ENCODE measurements at regions of chr3 and their contacts with region 1.

Region 1: GRCh38 chr3:111338059-111338698 is 203.8 kb upstream of the CD96 start:
- DNase-seq: peak; percentile 78
- H3K4me3 Mint-ChIP-seq: no peak overlapping the region
- H3K27ac Mint-ChIP-seq: no peak overlapping the region
- H3K4me1 Mint-ChIP-seq: peaks cover 19% of the 10 kb centered on the region
- H3K27me3 Mint-ChIP-seq: no peaks in the 10 kb centered on the region
- CTCF ChIP-seq: peak; percentile 60

Region 2: GRCh38 chr3:109532257-109533216 is 1805.6 kb before region 1 on chr3:
- CTCF ChIA-PET with region 1: interaction called, 4 read pairs
- POLR2A ChIA-PET with region 1: no interaction called
- intact Hi-C with region 1: loop called (anchors 2 kb)
- DNase-seq: peak; percentile 87
- H3K4me3 Mint-ChIP-seq: no peak overlapping the region
- H3K27ac Mint-ChIP-seq: no peak overlapping the region
- H3K4me1 Mint-ChIP-seq: no peaks in the 10 kb centered on the region
- H3K27me3 Mint-ChIP-seq: no peaks in the 10 kb centered on the region
- CTCF ChIP-seq: peak; percentile 57

Region 3: GRCh38 chr3:109731620-109732473 is 1606.3 kb before region 1 on chr3:
- CTCF ChIA-PET with region 1: interaction called, 3 read pairs
- POLR2A ChIA-PET with region 1: no interaction called
- intact Hi-C with region 1: loop called (anchors 1 kb)
- DNase-seq: peak; percentile 72
- H3K4me3 Mint-ChIP-seq: no peak overlapping the region
- H3K27ac Mint-ChIP-seq: no peak overlapping the region
- H3K4me1 Mint-ChIP-seq: peaks cover 7% of the 10 kb centered on the region
- H3K27me3 Mint-ChIP-seq: no peaks in the 10 kb centered on the region
- CTCF ChIP-seq: peak; percentile 85

Region 4: GRCh38 chr3:111012388-111013248 is 325.6 kb before region 1 on chr3:
- CTCF ChIA-PET with region 1: interaction called, 4 read pairs
- POLR2A ChIA-PET with region 1: no interaction called
- intact Hi-C with region 1: loop called (anchors 5 kb)
- DNase-seq: peak; percentile 60
- H3K4me3 Mint-ChIP-seq: no peak overlapping the region
- H3K27ac Mint-ChIP-seq: no peak overlapping the region
- H3K4me1 Mint-ChIP-seq: peaks cover 5% of the 10 kb centered on the region
- H3K27me3 Mint-ChIP-seq: no peaks in the 10 kb centered on the region
- CTCF ChIP-seq: no peak

Region 5: GRCh38 chr3:111165411-111165810 is 172.8 kb before region 1 on chr3:
- CTCF ChIA-PET with region 1: no interaction called
- POLR2A ChIA-PET with region 1: no interaction called
- intact Hi-C with region 1: no loop called
- DNase-seq: no peak
- H3K4me3 Mint-ChIP-seq: no peak overlapping the region
- H3K27ac Mint-ChIP-seq: no peak overlapping the region
- H3K4me1 Mint-ChIP-seq: no peaks in the 10 kb centered on the region
- H3K27me3 Mint-ChIP-seq: no peaks in the 10 kb centered on the region
- CTCF ChIP-seq: no peak

Region 6: GRCh38 chr3:111210003-111210711 is 128.0 kb before region 1 on chr3:
- CTCF ChIA-PET with region 1: no interaction called
- POLR2A ChIA-PET with region 1: no interaction called
- intact Hi-C with region 1: loop called (anchors 1 kb)
- DNase-seq: peak; percentile 46
- H3K4me3 Mint-ChIP-seq: no peak overlapping the region
- H3K27ac Mint-ChIP-seq: no peak overlapping the region
- H3K4me1 Mint-ChIP-seq: no peaks in the 10 kb centered on the region
- H3K27me3 Mint-ChIP-seq: no peaks in the 10 kb centered on the region
- CTCF ChIP-seq: no peak

Region 7: GRCh38 chr3:111539351-111540331 is 201.5 kb after region 1 on chr3:
- CTCF ChIA-PET with region 1: no interaction called
- POLR2A ChIA-PET with region 1: no interaction called
- intact Hi-C with region 1: loop called (anchors 2 kb)
- DNase-seq: peak; percentile 64
- H3K4me3 Mint-ChIP-seq: no peak overlapping the region
- H3K27ac Mint-ChIP-seq: no peak overlapping the region
- H3K4me1 Mint-ChIP-seq: peaks cover 22% of the 10 kb centered on the region
- H3K27me3 Mint-ChIP-seq: no peaks in the 10 kb centered on the region
- CTCF ChIP-seq: peak; percentile 61